Gastrocnemius medialis (tissue), 4 donors: ENCODE measurements at regions of chr5 and their contacts with region 1.

Region 1: DNA sequence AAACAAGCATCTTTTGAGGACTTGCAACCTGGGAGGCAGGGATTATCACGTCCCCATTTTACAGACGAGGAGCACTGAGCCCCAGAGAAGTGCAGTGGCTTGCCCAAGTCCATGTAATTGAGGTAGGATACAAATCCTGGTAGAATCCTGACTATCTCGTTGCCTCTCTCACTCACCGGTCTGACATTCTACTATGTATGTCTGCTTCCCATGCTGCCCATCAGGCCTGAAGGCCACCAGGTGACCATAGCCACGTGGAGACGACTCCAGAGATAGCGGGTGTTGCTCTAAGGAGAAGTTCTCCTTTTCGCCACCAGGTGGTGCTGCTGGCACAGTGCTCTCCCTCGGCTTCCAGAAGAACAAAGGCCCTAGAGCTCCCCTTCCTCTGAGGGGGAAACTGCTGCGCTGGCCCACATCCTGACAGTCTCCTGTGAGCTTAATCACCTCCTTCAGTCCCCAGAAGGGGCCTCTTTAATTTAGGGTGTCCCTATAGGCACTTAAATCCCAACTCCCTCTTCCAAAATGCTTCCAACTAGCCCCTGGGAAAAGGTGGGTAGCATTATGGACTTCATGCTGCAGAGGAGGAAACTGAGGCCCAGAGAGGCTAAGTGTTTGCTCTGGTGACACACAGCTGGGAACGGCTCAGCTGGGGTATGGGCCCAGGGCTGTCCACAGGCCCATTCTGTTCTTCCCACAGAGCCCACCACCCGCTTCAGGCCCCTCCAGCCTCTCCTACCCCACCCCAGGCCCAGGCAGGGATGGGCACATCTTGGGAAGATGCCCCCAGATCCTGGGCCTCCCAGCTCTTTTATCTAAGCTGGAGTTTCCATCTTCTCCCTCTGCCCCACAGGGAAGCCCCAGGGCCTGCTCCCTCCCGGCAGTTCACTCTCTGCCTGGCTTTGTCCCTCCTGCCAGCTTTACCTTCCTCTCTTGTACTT is 6.4 kb downstream of the SLC34A1 start:
- DNase-seq: peak; percentile 51 to 73
- ATAC-seq: peak; percentile 84 to 95
- H3K4me3 ChIP-seq: no peak overlapping the region
- H3K27ac ChIP-seq: no peak overlapping the region
- H3K4me1 ChIP-seq: no peaks in the 10 kb centered on the region
- H3K27me3 ChIP-seq: no peaks in the 10 kb centered on the region
- CTCF ChIP-seq: peak; percentile 91 to 99 (median 95)
- POLR2A ChIP-seq: no peak

Region 2: DNA sequence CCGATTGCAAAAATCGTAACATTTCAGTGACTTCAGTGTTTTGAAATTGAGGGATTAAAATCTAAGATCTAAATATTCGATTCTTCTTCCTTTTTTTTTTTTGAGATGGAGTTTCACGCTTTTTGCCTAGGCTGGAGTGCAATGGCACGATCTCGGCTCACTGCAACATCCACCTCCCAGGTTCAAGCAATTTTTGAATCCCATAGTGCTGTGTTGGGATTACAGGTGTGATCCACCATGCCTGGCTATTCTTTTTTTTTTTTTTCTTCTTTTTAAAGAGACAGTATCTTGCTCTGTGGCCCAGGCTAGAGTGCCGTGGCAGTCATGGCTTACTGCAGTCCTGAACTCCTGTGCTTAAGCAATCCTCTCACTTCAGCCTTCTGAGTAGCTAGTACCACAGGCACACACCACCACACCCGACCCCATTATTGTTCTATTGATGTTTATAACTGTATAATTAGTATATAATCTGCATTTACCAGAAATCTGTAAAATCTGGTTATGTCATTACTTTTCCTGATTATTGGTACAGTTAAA is 214.4 kb before region 1 on chr5:
- in situ Hi-C with region 1: no loop called
- intact Hi-C with region 1: no loop called
- DNase-seq: no peak
- ATAC-seq: peak in 1 of 2 donors; percentile 58
- H3K4me3 ChIP-seq: no peak overlapping the region
- H3K27ac ChIP-seq: no peak overlapping the region
- H3K4me1 ChIP-seq: peaks cover 17 to 23% of the 10 kb centered on the region in 2 donors
- H3K27me3 ChIP-seq: no peaks in the 10 kb centered on the region
- CTCF ChIP-seq: no peak
- POLR2A ChIP-seq: no peak

Region 3: DNA sequence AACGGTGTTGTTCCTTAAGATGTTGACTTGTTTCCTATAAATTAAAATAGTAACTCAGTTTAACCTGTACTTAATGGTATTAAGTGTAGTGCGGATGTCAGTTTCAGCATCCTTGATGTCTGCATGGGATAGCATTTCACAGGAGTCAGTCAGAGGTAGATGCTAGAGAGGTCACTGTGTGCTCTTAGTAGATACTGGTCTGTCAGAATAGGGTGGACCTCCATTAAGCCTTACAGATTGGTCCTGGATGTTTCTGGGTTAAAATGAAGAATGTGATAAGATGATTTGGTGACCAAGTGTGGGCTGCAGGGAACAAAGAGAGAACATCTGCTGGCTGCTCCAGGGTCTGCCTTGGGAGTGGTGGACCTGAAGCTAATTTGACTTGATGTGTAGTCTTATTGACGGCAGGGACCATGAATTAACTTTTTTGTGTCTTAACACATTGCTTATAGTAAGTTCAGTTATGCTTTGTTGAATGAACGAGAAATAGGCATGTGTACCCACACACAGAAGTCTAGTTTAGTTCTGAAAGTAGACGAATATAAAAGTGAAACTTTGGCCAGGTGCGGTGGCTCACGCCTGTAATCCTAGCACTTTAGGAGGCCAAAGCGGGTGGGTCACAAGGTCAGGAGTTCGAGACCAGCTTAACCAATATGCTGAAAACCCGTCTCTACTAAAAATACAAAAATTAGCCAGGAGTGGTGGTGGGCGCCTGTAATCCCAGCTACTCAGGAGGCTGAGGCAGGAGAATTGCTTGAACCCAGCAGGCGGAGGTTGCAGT is 99.6 kb before region 1 on chr5:
- in situ Hi-C with region 1: no loop called
- intact Hi-C with region 1: no loop called
- DNase-seq: no peak
- ATAC-seq: no peak
- H3K4me3 ChIP-seq: no peak overlapping the region
- H3K27ac ChIP-seq: no peak overlapping the region
- H3K4me1 ChIP-seq: no peaks in the 10 kb centered on the region
- H3K27me3 ChIP-seq: no peaks in the 10 kb centered on the region
- CTCF ChIP-seq: no peak
- POLR2A ChIP-seq: no peak

Region 4: GRCh38 chr5:177446200-177447065 is 55.8 kb after region 1 on chr5 and contains the start of gene PRR7:
- in situ Hi-C with region 1: loop called in 1 of 4 experiments (anchors 10 kb)
- intact Hi-C with region 1: no loop called
- DNase-seq: no peak
- ATAC-seq: peak; percentile 55 to 67
- H3K4me3 ChIP-seq: peak within 1 kb of the TSS; percentile 47 to 68 (median 54)
- H3K27ac ChIP-seq: no peak within 1 kb of the TSS
- H3K4me1 ChIP-seq: peaks cover 12 to 19% of the 10 kb centered on the region in 2 donors
- H3K27me3 ChIP-seq: peaks cover 7 to 33% (median 21%) of the 10 kb centered on the region in 3 donors
- CTCF ChIP-seq: peak in 1 of 5 experiments; percentile 29
- POLR2A ChIP-seq: peak in 1 of 2 donors; percentile 17
- total RNA-seq, gene PRR7: 0.63 to 2.0 (median 1.4) TPM in 3 of 4 donors, not detected in the other

Region 5: DNA sequence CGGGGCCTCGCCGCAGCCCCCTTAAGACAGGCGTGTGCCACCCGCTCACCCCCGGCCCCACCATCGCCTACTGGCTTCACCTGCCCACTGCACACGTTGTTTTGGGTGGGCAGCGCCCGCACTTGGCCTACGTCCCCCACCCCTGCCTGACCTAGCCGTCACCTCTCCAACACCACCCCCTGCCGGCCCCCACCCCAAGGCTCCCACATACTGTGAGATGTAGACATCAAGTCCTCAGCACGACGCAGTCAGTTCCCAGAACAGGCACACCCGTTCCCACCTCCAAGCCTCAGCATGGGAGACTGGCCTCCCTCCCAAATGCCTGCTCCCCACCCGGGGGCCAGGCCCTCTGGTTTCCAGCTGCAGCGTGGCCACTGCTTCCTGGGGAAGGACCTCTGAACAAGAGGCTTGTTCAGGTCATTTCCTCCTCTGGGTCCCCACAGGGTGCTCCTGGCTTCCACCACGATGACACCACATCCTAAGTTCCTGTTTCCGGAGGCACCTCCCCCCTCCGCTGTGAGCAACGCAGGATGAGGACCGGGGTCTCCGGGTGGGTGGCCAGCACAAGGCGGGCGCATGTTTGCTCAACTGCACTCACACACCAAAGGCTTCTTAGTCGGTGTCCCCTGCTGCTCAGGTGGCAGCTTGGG is 71.5 kb after region 1 on chr5:
- in situ Hi-C with region 1: loop called in 1 of 4 experiments (anchors 5 kb)
- intact Hi-C with region 1: no loop called
- DNase-seq: no peak
- ATAC-seq: no peak
- H3K4me3 ChIP-seq: peak overlapping the region in 1 of 4 donors; percentile 33
- H3K27ac ChIP-seq: peak overlapping the region; percentile 47 to 69 (median 58)
- H3K4me1 ChIP-seq: peaks cover 0 to 3% of the 10 kb centered on the region in 2 donors
- H3K27me3 ChIP-seq: no peaks in the 10 kb centered on the region
- CTCF ChIP-seq: no peak
- POLR2A ChIP-seq: no peak

Region 6: DNA sequence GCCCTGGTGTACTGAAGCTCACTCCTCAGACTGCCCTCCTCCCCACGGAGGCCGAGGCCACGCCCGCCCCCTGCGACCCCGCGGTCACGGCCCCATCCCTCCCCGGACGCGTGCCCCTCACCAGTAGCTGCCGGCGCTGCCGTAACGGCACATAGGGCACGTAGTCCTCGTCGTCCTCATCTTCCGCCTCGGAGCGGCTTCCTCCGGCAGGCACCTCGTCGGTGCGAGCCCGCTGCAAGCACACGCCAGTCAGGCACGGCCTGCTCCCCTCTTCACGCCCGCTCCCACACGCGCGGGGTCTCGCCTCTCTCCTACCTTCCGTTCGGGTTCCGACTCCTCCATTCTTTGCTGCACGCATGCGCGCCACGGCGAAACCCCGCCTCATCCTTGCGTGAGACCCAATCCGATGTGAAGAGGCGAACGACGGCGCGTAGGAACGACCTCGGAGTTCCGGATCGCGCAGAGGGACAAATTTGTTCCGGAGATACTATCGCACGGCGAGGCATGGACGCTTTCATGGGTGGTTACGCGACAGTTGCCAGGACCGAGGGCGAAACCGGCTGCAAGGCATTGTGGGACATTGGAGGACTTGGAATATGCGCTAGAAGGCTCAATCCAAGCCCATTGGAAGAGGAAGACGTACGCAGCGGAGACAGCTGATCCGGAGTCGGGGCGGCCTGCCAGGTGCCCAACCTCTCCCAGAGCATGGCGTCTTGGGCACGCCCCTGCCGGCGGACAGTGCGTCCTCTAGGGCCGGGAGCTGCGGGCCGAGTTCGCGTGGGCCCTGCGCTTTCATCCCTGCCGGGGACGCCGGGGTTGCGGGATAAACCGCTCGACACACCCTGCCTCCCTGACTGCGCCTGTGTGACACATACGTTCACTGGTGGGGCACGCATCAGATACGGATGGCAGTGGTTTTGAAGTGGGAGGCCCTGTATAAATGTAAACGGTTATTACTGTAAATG is 126.3 kb after region 1 on chr5 and contains the start of gene DDX41:
- in situ Hi-C with region 1: loop called in 1 of 4 experiments (anchors 25 kb)
- intact Hi-C with region 1: no loop called
- DNase-seq: peak; percentile 98 to 99
- ATAC-seq: peak; percentile 95 to 96
- H3K4me3 ChIP-seq: peak within 1 kb of the TSS; percentile 55 to 98 (median 90)
- H3K27ac ChIP-seq: peak within 1 kb of the TSS; percentile 88 to 94 (median 92)
- H3K4me1 ChIP-seq: peaks cover 15 to 28% of the 10 kb centered on the region in 2 donors
- H3K27me3 ChIP-seq: no peaks in the 10 kb centered on the region
- CTCF ChIP-seq: peak in 3 of 5 experiments; percentile 29 to 43 (median 37)
- POLR2A ChIP-seq: peak; percentile 4 to 25
- total RNA-seq, gene DDX41: 47.1 to 105 (median 62.3) TPM